Activated naive CD4-positive, alpha-beta T cell treated with anti-CD3 and anti-CD28 coated beads for 36 hours (primary cell): ENCODE measurements at regions of chr9 and their contacts with region 1.

Region 1: GRCh38 chr9:36008774-36009300 is 27.9 kb upstream of the RECK start:
- DNase-seq: peak; percentile 74
- H3K4me3 Mint-ChIP-seq: no peak overlapping the region
- H3K27ac Mint-ChIP-seq: no peak overlapping the region
- H3K4me1 Mint-ChIP-seq: peaks cover 22% of the 10 kb centered on the region
- H3K27me3 Mint-ChIP-seq: peaks cover 5% of the 10 kb centered on the region

Region 2: DNA sequence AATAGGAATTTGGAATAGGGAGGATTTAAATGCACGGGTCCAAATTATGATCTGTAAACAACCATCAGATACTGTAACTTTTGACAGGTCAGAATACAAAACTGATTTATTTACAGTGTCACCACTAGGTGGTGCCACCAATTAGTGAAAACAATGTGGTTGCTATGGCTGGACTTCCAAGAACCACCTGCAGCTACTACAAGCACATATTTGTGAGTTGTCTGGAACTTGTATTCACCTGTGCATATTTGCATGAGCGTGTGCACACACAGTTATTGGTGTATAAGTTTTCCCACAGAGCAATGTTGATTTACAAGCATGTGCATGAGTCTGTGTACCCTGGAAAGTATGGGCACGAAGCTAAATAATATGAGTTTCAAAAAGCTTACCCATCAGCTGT is 105.8 kb before region 1 on chr9:
- CTCF ChIA-PET with region 1: interaction called, 14 read pairs
- intact Hi-C with region 1: no loop called
- DNase-seq: peak; percentile 52
- H3K4me3 Mint-ChIP-seq: no peak overlapping the region
- H3K27ac Mint-ChIP-seq: no peak overlapping the region
- H3K4me1 Mint-ChIP-seq: peaks cover 23% of the 10 kb centered on the region
- H3K27me3 Mint-ChIP-seq: no peaks in the 10 kb centered on the region

Region 3: GRCh38 chr9:35954942-35955546 is 53.8 kb before region 1 on chr9:
- CTCF ChIA-PET with region 1: interaction called, 17 read pairs
- intact Hi-C with region 1: loop called (anchors 1 kb)
- DNase-seq: peak; percentile 73
- H3K4me3 Mint-ChIP-seq: no peak overlapping the region
- H3K27ac Mint-ChIP-seq: no peak overlapping the region
- H3K4me1 Mint-ChIP-seq: no peaks in the 10 kb centered on the region
- H3K27me3 Mint-ChIP-seq: no peaks in the 10 kb centered on the region

Region 4: DNA sequence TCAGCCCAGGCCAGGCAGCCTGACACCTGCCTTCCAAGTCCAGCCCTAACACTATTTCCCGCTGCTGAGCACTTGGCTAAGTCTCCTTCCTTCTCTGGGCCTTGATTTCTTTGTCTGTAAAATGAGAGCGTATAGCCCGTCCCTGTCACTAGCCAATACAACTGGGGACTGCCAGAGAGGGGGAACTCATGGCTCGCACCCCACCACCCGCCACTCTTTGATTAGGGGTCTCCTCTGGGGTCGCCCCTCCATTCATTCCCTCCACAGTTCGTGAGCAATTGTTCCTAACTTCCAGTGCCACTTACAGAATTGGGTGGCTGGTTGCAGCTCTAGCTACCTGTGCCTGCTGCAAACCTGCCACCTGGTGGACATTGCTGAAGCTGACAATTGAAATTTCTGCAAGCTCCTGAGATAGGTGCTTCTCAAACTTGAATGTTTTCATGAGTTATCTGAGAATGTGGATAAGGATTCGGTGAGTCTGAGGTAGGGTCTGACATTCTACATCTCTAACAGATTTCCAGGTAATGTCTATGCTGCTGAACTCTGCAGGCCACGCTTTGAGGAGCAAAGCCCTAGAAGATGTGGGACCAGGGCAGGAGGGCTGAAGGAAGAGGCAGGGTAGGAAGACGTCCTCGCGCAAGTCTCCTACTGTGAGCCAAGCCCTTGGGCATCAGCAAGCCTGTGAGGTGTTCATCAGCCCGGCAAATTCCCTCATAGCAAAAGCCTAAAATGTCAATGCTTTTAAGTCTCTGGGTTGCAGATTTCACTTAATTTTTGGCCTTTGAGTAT is 14.6 kb after region 1 on chr9:
- CTCF ChIA-PET with region 1: interaction called, 107 read pairs
- intact Hi-C with region 1: loop called (anchors 1 kb)
- DNase-seq: peak; percentile 84
- H3K4me3 Mint-ChIP-seq: no peak overlapping the region
- H3K27ac Mint-ChIP-seq: no peak overlapping the region
- H3K4me1 Mint-ChIP-seq: no peaks in the 10 kb centered on the region
- H3K27me3 Mint-ChIP-seq: no peaks in the 10 kb centered on the region

Region 5: GRCh38 chr9:36036780-36037548 is 28.1 kb after region 1 on chr9 and contains the start of gene RECK:
- CTCF ChIA-PET with region 1: interaction called, 7 read pairs
- intact Hi-C with region 1: loop called (anchors 2 kb)
- DNase-seq: peak; percentile 88
- H3K4me3 Mint-ChIP-seq: peak within 1 kb of the TSS; percentile 93
- H3K27ac Mint-ChIP-seq: peak within 1 kb of the TSS; percentile 67
- H3K4me1 Mint-ChIP-seq: peaks cover 39% of the 10 kb centered on the region
- H3K27me3 Mint-ChIP-seq: no peaks in the 10 kb centered on the region
- total RNA-seq, gene RECK: 7.8 to 8.5 TPM

Region 6: GRCh38 chr9:36166101-36166927 is 157.5 kb after region 1 on chr9:
- CTCF ChIA-PET with region 1: interaction called, 5 read pairs
- intact Hi-C with region 1: loop called (anchors 1 kb)
- DNase-seq: peak; percentile 81
- H3K4me3 Mint-ChIP-seq: peak overlapping the region; percentile 70
- H3K27ac Mint-ChIP-seq: no peak overlapping the region
- H3K4me1 Mint-ChIP-seq: peaks cover 3% of the 10 kb centered on the region
- H3K27me3 Mint-ChIP-seq: no peaks in the 10 kb centered on the region